Posterior cingulate gyrus (tissue), 11 donors: ENCODE measurements at regions of chr7 and their contacts with region 1.

Region 1: GRCh38 chr7:83410989-83411591 is 237.8 kb downstream of the SEMA3E start:
- DNase-seq: peak in 1 of 10 donors; percentile 21

Region 2: GRCh38 chr7:82886324-82886723 is 524.8 kb before region 1 on chr7:
- intact Hi-C with region 1: no loop called
- DNase-seq: no peak

Region 3: DNA sequence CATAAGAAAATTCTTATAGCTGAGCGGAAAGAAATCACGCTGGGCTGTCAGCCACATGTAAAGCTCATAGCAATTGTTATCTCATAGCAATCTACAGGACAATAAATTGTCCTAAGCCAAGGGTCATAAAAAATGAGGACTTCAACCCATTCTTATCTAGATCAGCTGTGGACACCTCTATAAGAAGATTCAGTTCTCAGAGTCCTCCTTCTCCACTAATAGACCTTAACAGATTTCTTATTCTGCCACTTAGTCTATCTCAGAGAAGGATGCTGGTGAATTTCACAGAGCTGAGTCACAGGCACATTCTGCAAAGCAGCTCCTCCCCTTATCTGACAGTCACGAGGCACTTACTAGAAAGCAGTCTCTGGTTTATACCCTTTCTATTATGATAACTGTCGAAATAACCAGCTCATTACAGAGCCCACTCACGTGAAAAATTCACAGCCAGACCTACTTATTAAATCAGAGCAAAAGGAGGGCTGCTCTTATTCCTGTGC is 63.1 kb before region 1 on chr7:
- intact Hi-C with region 1: no loop called
- DNase-seq: no peak

Region 4: GRCh38 chr7:83655951-83656556 is 245.0 kb after region 1 on chr7:
- intact Hi-C with region 1: loop called (anchors 2 kb)
- DNase-seq: peak in 4 of 10 donors; percentile 15 to 72 (median 27)

Region 5: DNA sequence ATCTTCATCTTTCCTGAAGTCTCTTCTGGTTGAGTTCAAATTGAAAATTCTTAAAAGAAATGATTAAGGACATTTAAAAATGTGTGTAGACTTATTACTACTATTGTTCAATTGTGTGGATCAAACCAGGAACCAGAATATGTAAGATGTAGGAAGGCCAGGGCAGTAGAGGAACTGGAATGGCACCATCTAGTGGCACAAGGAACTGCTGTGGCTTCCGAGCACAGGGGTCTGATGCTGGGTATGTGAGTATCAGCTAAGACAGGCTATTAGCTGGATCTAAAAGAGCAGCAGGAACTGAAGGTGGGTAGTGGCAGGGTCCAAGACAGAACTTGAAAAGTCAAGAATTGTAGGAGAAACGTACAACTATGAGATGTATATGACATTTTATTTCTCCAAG is 536.2 kb after region 1 on chr7:
- intact Hi-C with region 1: loop called (anchors 5 kb)
- DNase-seq: peak in 5 of 10 donors; percentile 19 to 81 (median 50)